AG04449 (cell line): ENCODE measurements at regions of chr7 and their contacts with region 1.

Region 1: DNA sequence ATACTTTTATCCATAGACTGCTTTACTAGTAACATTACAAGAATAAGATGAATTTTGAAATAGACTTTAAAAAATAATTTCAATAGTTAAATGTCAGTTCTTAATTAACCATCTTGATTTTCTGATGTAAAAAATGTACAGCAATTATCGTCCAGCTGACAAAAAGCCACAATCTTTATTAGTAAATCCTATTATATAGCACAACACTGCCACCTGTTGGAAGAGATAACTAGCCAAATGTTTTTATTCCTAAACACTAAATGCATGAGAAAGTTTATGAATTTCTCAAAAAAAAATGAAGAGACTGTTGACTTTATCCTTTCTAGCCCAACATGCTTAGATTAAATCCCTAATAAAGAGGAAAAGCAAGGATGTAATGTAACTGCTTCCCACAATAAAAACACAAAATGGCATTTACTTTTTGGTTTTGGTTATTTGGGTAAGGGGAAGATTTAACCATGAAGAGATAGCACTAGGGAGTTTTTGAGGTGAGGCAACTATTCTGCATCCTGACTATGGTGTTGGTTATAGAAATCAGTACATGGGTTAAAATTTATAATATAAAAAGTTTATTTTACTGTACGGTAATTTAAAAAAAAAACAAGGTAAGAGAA is 8.0 kb downstream of the COA1 start:
- DNase-seq: no peak
- H3K4me3 ChIP-seq: no peak overlapping the region
- CTCF ChIP-seq: no peak

Region 2: DNA sequence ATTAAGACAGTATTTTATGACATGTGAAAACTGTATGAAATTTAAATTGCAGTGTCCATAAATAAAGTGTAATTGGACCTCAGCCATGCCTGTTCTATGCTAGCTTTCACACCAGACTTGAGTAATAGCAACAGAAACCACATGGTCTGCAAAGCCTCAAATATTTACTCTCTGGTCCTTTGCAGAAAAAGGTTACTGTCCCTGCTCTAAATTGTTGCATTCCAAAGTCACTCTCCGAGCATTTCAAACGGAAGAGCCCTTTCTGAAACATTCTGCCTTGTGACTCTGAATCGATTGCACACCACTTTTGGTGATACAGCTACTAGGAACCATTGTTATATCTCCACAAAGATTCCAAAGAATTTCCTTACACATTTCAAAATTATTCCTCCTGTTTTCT is 219.4 kb before region 1 on chr7:
- CTCF ChIA-PET with region 1: no interaction called
- POLR2A ChIA-PET with region 1: no interaction called
- DNase-seq: peak; percentile 21
- H3K4me3 ChIP-seq: no peak overlapping the region
- CTCF ChIP-seq: no peak

Region 3: DNA sequence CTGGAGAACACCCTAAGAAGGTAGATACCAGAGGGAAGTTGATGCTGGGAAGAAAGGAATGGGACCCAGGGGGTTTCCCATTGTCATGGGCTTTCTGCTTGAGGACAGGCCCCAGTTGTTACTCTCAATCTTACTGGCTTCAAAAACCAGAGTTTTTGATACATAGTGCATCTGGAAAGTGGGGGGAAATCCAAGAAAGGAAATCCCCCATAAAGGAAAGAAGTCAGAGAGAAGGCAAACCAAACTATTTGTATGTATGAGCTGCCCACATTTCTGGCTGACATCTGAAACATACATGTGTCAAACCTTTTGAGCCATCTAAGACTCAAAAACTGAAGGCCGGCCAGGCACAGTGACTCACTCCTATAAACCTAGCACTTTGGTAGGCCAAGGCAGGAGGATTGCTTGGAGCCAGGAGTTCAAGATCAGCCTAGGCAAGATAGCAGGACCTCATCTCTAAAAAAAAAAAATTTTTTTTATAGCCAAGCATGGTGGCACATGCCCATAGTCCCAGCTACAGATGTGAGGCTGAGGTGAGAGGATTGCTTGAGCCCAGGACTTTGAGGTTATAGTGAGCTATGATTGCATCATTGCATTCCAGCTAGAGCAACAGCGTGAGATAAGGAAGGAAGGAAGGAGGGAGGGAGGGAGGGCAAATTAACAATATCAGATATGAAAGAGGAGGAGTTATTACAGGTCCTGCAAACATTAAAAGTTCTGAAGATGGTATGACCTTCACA is 14.7 kb after region 1 on chr7:
- CTCF ChIA-PET with region 1: interaction called, 23 read pairs
- POLR2A ChIA-PET with region 1: no interaction called
- DNase-seq: no peak
- H3K4me3 ChIP-seq: no peak overlapping the region
- CTCF ChIP-seq: no peak